Activated CD4-positive, alpha-beta memory T cell treated with anti-CD3 and anti-CD28 coated beads, Interleukin-2, amount 10 ng/mL, durations not matched to agents 7 days and 5 days (primary cell): ENCODE measurements at regions of chr12 and their contacts with region 1.

Region 1: GRCh38 chr12:50763639-50764285 is at the start of gene ATF1:
- DNase-seq: peak; percentile 93
- H3K4me3 Mint-ChIP-seq: peak within 1 kb of the TSS; percentile 79
- H3K27ac Mint-ChIP-seq: peak within 1 kb of the TSS; percentile 91
- H3K4me1 Mint-ChIP-seq: peaks cover 32% of the 10 kb centered on the region
- H3K27me3 Mint-ChIP-seq: no peaks in the 10 kb centered on the region
- total RNA-seq, gene ATF1: 44.0 to 48.3 TPM

Region 2: GRCh38 chr12:50504798-50505385 is 258.9 kb before region 1 on chr12 and contains the start of gene DIP2B:
- CTCF ChIA-PET with region 1: interaction called, 11 read pairs
- POLR2A ChIA-PET with region 1: interaction called, 16 read pairs
- DNase-seq: peak; percentile 95
- H3K4me3 Mint-ChIP-seq: peak within 1 kb of the TSS; percentile 86
- H3K27ac Mint-ChIP-seq: peak within 1 kb of the TSS; percentile 82
- H3K4me1 Mint-ChIP-seq: peaks cover 48% of the 10 kb centered on the region
- H3K27me3 Mint-ChIP-seq: no peaks in the 10 kb centered on the region
- total RNA-seq, gene DIP2B: 20.3 to 22.9 TPM

Region 3: DNA sequence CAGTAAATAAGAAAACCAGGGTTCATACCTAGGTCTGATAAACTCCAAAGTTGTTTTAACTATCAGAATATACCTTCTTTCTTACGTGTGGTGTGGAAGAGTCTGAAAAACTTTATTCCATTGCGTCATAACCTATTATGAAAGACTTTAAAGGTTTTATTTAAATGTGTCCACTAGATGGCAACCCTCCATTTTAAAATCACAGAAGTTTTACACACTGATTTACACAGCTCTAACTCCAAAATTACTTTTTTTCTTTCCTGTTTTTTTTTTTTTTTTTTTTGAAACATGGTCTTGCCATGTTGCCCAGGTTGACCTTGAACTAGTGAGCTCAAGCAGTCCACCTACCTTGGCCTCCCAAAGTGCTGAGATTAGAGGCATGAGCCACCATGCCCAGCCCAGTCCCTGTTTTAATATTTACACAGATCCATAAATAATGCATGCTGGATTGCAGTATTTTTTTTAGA is 61.6 kb after region 1 on chr12:
- CTCF ChIA-PET with region 1: interaction called, 25 read pairs
- POLR2A ChIA-PET with region 1: interaction called, 10 read pairs
- DNase-seq: no peak
- H3K4me3 Mint-ChIP-seq: no peak overlapping the region
- H3K27ac Mint-ChIP-seq: no peak overlapping the region
- H3K4me1 Mint-ChIP-seq: peaks cover 5% of the 10 kb centered on the region
- H3K27me3 Mint-ChIP-seq: no peaks in the 10 kb centered on the region

Region 4: GRCh38 chr12:51047655-51048540 is 284.1 kb after region 1 on chr12 and contains the start of gene LETMD1:
- CTCF ChIA-PET with region 1: interaction called, 5 read pairs
- POLR2A ChIA-PET with region 1: interaction called, 22 read pairs
- DNase-seq: peak; percentile 93
- H3K4me3 Mint-ChIP-seq: peak within 1 kb of the TSS; percentile 94
- H3K27ac Mint-ChIP-seq: peak within 1 kb of the TSS; percentile 92
- H3K4me1 Mint-ChIP-seq: peaks cover 37% of the 10 kb centered on the region
- H3K27me3 Mint-ChIP-seq: no peaks in the 10 kb centered on the region
- total RNA-seq, gene LETMD1: 92.1 to 93.9 TPM

Region 5: DNA sequence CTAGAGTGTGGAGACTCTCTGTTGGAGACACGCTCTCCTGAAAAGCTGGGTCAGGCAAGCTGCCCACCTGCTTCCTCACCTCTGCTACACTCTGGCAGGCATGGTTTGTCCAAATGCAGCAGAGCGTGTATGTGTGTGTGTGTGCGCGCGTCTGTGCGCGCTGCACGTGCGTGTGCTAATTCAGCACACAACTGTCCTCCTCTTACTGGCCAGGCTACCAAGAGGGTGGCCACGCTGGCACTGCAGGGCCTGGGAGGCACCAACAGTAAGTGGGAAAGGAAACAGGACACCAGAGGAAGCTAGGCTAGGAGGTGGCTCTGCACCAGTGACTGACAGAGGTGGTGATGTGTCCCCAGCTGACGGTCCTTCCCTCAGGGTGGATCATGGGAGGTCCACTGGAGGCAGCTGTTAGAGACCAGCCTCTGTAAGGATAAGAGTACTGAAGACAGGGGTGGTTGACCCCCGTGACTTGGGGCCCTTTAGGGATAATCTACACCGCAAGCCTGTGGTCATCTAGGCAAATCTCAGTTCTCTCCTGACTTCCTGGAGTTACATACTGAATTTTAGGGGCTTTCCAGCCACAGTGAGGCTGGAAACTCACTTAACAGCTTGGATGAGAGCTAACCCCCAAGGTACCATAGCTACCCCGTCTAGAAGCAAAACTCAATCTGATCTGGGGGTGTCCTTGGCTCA is 424.7 kb after region 1 on chr12:
- CTCF ChIA-PET with region 1: no interaction called
- POLR2A ChIA-PET with region 1: no interaction called
- DNase-seq: no peak
- H3K4me3 Mint-ChIP-seq: no peak overlapping the region
- H3K27ac Mint-ChIP-seq: no peak overlapping the region
- H3K4me1 Mint-ChIP-seq: no peaks in the 10 kb centered on the region
- H3K27me3 Mint-ChIP-seq: no peaks in the 10 kb centered on the region

Region 6: GRCh38 chr12:51326762-51327439 is 563.1 kb after region 1 on chr12:
- CTCF ChIA-PET with region 1: interaction called, 4 read pairs
- POLR2A ChIA-PET with region 1: interaction called, 14 read pairs
- DNase-seq: peak; percentile 24
- H3K4me3 Mint-ChIP-seq: peak overlapping the region; percentile 45
- H3K27ac Mint-ChIP-seq: peak overlapping the region; percentile 97
- H3K4me1 Mint-ChIP-seq: peaks cover 70% of the 10 kb centered on the region
- H3K27me3 Mint-ChIP-seq: peaks cover 2% of the 10 kb centered on the region